Activated T-helper 1 cell treated with anti-CD3 and anti-CD28 coated beads, Interleukin-12 subunit alpha, Interleukin-12 subunit beta, Interleukin-2, Interleukin-4 antibody, amounts not matched to agents 30 ng/mL and 10 ng/mL and 1 ng/mL, durations not matched to agents 14 hours and 24 hours and 36 hours (primary cell): ENCODE measurements at regions of chr12 and their contacts with region 1.

Region 1: GRCh38 chr12:95858479-95859343 is at the start of gene SNRPF:
- DNase-seq: peak; percentile 93
- H3K4me3 Mint-ChIP-seq: no peak within 1 kb of the TSS
- H3K27ac Mint-ChIP-seq: no peak within 1 kb of the TSS
- H3K4me1 Mint-ChIP-seq: peaks cover 12% of the 10 kb centered on the region
- H3K27me3 Mint-ChIP-seq: peaks cover 5% of the 10 kb centered on the region
- total RNA-seq, gene SNRPF: 65.6 and 70.9 TPM in 2 replicates

Region 2: DNA sequence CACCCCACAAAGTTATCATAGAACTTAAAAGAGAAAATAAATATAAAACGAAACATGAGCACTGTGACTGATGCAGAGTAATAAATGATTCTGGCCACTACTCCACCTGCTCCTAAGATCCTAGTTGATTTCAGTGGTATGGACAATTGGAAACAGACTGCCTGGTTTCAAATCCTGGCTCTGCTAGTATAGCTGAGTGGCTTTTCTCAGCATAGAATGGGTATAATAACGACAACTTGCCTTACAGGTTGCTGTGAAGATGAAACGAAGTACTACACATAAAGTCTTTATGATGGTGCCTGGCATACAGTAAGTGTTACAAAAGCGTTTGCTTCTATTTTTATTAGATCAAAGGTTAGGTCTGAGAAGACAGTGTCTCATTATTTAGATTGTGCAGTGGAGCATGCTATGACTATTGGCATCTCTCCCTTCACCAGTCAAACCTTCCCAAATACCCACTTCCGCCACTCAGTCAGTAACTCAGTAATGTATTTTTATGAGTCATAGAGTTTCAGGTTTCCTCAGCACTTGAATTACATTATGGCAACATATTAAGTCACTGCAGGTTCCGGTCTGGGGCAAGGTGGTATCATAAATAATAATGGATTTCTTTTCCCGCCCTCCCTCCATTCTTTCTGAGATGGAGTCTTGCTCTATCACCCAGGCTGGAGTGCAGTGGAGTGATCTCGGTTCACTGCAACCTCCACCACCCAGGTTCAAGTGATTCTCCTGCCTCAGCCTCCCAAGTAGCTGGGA is 755.6 kb before region 1 on chr12:
- intact Hi-C with region 1: loop called (anchors 5 kb)
- DNase-seq: peak; percentile 39
- H3K4me3 Mint-ChIP-seq: no peak overlapping the region
- H3K27ac Mint-ChIP-seq: peak overlapping the region; percentile 20
- H3K4me1 Mint-ChIP-seq: peaks cover 10% of the 10 kb centered on the region
- H3K27me3 Mint-ChIP-seq: no peaks in the 10 kb centered on the region

Region 3: DNA sequence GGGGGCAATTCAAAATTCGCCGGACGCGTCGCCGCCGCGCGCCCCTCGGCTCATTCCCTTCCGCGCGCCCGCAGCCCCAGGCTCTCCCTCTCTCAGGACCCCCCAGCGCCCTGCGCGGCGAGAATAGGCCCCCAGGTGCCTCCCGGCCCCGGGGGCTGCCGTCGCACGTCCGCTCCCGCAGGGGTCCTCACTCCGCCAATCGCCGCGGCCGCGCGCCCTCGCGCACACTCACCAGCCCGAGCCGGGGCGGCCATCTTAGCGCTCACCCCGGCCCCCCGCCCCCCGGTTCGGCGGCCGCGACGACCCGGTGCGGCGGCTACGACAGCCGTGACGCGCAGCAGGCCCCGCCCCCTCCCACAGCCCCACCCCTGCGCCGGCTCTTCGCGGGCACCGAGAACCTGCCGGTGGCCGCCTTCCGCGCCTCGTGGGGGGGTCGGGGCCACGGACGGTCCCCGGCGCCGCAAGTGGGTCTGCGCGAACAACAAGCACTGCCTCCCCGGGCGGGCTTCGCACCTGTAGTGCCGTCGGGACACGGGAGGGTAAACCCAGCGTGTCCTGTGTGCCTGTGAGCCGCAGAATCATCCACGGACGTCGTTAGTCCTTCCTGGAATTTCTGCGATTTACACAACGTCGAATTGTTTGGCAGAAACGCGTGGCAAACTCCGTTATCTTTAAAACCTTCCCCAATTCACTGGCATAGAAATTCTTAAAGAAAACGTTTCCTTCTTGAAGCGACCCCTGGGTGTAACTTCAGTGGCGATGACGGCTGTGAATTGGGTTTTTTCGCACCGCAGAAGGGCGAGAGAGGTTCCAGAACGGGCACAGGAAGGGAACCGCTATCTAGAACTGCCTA is 309.9 kb before region 1 on chr12:
- intact Hi-C with region 1: loop called (anchors 1 kb)
- DNase-seq: peak; percentile 66
- H3K4me3 Mint-ChIP-seq: peak overlapping the region; percentile 91
- H3K27ac Mint-ChIP-seq: peak overlapping the region; percentile 62
- H3K4me1 Mint-ChIP-seq: peaks cover 34% of the 10 kb centered on the region
- H3K27me3 Mint-ChIP-seq: peaks cover 3% of the 10 kb centered on the region

Region 4: GRCh38 chr12:95788637-95789036 is 70.1 kb before region 1 on chr12:
- intact Hi-C with region 1: no loop called
- DNase-seq: no peak
- H3K4me3 Mint-ChIP-seq: peak overlapping the region; percentile 15
- H3K27ac Mint-ChIP-seq: no peak overlapping the region
- H3K4me1 Mint-ChIP-seq: peaks cover 10% of the 10 kb centered on the region
- H3K27me3 Mint-ChIP-seq: peaks cover 73% of the 10 kb centered on the region

Region 5: GRCh38 chr12:95942524-95943329 is 84.0 kb after region 1 on chr12 and contains the start of gene CCDC38:
- intact Hi-C with region 1: loop called (anchors 2 kb)
- DNase-seq: peak; percentile 78
- H3K4me3 Mint-ChIP-seq: peak within 1 kb of the TSS; percentile 92
- H3K27ac Mint-ChIP-seq: peak within 1 kb of the TSS; percentile 95
- H3K4me1 Mint-ChIP-seq: peaks cover 5% of the 10 kb centered on the region
- H3K27me3 Mint-ChIP-seq: peaks cover 24% of the 10 kb centered on the region
- total RNA-seq, gene CCDC38: not detected in 2 replicates

Region 6: GRCh38 chr12:96132819-96133218 is 274.1 kb after region 1 on chr12:
- intact Hi-C with region 1: no loop called
- DNase-seq: no peak
- H3K4me3 Mint-ChIP-seq: no peak overlapping the region
- H3K27ac Mint-ChIP-seq: no peak overlapping the region
- H3K4me1 Mint-ChIP-seq: peaks cover 22% of the 10 kb centered on the region
- H3K27me3 Mint-ChIP-seq: peaks cover 10% of the 10 kb centered on the region

Region 7: DNA sequence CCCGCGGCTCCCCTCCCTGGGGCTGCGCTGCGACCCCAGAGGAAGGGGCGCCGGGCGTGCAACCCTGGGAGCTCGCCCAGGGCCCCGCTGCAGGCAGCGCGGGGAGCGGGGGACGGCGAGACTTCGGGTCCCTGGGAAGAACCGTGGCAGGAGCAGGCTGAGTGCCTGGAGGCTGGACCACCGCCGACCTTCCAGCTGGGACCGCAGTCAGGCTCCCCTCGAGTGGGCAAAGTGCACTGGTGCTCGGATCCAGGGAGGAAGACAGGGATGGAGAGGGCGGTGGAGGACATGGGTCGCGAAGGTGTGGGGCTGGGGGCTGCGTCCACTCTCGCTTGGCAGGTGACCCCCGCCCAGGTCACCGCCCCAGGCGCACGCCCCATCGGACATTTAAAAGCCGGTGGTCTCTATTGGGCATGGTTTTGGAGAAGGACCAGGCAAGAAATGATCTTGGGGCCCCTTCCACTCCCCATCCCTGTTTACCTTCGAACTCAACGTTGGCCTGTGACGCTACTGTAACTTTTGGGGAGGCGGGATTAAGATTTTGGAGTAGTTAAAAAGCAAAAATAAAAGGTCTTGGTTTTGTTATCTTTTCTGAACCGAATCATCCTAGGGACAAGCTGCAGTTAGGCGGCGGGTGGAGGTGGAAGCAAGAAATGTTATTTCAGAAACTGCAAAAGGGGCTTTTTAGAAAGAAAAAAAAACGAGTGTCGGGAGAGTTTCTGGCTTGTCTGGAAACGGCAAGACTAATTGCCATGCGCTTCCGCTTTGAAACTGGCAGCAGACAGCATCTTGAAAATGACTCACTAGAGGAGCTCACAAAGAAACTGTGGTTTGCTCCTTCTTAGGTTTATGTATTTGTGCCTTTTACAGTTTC is 336.5 kb after region 1 on chr12:
- intact Hi-C with region 1: loop called (anchors 5 kb)
- DNase-seq: peak; percentile 68
- H3K4me3 Mint-ChIP-seq: peak overlapping the region; percentile 96
- H3K27ac Mint-ChIP-seq: peak overlapping the region; percentile 98
- H3K4me1 Mint-ChIP-seq: peaks cover 49% of the 10 kb centered on the region
- H3K27me3 Mint-ChIP-seq: no peaks in the 10 kb centered on the region

Region 8: GRCh38 chr12:96489103-96490056 is 630.7 kb after region 1 on chr12 and contains the start of gene CFAP54:
- intact Hi-C with region 1: loop called (anchors 2 kb)
- DNase-seq: peak; percentile 92
- H3K4me3 Mint-ChIP-seq: peak within 1 kb of the TSS; percentile 86
- H3K27ac Mint-ChIP-seq: peak within 1 kb of the TSS; percentile 85
- H3K4me1 Mint-ChIP-seq: peaks cover 43% of the 10 kb centered on the region
- H3K27me3 Mint-ChIP-seq: peaks cover 25% of the 10 kb centered on the region
- total RNA-seq, gene CFAP54: 0.17 and 0.34 TPM in 2 replicates